ENCODE measurements at regions of chr10 and their contacts with region 1.

Region 1: GRCh38 chr10:30027057-30028005 is 32.1 kb downstream of the JCAD start:
- DNase-seq: peak; percentile 72 to 96 (median 83)
- ATAC-seq: peak; percentile 93
- H3K4me3 ChIP-seq: peak overlapping the region; percentile 35
- H3K4me3 Mint-ChIP-seq: peak overlapping the region; percentile 74
- H3K27ac ChIP-seq: no peak overlapping the region
- H3K27ac Mint-ChIP-seq: peak overlapping the region; percentile 79
- H3K4me1 ChIP-seq: peaks cover 40% of the 10 kb centered on the region
- H3K4me1 Mint-ChIP-seq: peaks cover 36% of the 10 kb centered on the region
- H3K27me3 ChIP-seq: peaks cover 32 to 35% of the 10 kb centered on the region in 2 experiments
- H3K27me3 Mint-ChIP-seq: peaks cover 85% of the 10 kb centered on the region
- CTCF ChIP-seq: peak; percentile 25

Region 2: DNA sequence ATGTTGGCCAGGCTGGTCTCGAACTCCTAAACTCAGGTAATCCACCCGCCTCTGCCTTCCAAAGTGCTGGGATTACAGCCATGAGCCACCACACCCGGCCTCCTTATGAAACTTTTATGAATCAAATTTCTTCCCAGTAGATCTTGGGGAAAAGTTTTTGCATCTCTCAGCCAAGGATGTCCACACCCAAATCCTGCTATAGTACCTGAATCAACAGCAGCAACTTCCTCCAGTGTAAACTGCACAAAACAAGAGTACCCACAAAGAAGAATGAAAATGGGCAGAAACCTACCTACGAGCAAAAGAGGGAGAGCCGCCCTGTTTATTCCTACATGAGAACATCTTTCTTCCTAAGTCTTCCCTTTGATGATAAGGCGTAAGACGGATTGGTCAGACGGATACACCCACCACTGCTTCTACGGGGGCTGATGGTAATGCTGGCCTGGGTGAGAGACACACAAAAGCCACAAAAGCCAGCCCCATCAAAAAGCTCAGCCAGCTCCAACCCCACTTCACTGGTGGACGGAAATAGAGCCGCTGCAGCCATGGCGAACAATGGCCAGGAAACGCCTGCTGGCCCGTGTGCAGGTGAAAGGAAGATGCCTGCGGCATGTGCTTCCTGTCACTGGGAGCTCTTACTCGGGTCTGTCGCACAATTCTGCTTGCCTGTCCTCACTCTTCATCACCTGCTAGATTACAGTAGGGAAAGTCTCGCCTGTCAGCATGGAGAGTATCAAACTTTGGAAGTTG is 21.6 kb after region 1 on chr10:
- CTCF ChIA-PET with region 1: no interaction called
- POLR2A ChIA-PET with region 1: interaction called, 6 read pairs
- intact Hi-C with region 1: loop called in 1 of 2 experiments (anchors 2 kb)
- DNase-seq: peak in 1 of 14 experiments; percentile 35
- ATAC-seq: no peak
- H3K4me3 ChIP-seq: no peak overlapping the region
- H3K4me3 Mint-ChIP-seq: peak overlapping the region; percentile 5
- H3K27ac ChIP-seq: no peak overlapping the region
- H3K27ac Mint-ChIP-seq: no peak overlapping the region
- H3K4me1 ChIP-seq: peaks cover 21% of the 10 kb centered on the region
- H3K4me1 Mint-ChIP-seq: peaks cover 21% of the 10 kb centered on the region
- H3K27me3 ChIP-seq: peaks cover 43 to 48% of the 10 kb centered on the region in 2 experiments
- H3K27me3 Mint-ChIP-seq: peaks cover 78% of the 10 kb centered on the region
- CTCF ChIP-seq: no peak

Region 3: GRCh38 chr10:30059209-30060107 is 32.1 kb after region 1 on chr10 and contains the start of gene JCAD:
- CTCF ChIA-PET with region 1: no interaction called
- POLR2A ChIA-PET with region 1: interaction called, 3 read pairs
- intact Hi-C with region 1: loop called (anchors 2 to 5 kb)
- DNase-seq: peak in 12 of 14 experiments; percentile 12 to 66 (median 40)
- ATAC-seq: peak; percentile 71
- H3K4me3 ChIP-seq: no peak within 1 kb of the TSS
- H3K4me3 Mint-ChIP-seq: peak within 1 kb of the TSS; percentile 28
- H3K27ac ChIP-seq: no peak within 1 kb of the TSS
- H3K27ac Mint-ChIP-seq: no peak within 1 kb of the TSS
- H3K4me1 ChIP-seq: peaks cover 10% of the 10 kb centered on the region
- H3K4me1 Mint-ChIP-seq: peaks cover 5% of the 10 kb centered on the region
- H3K27me3 ChIP-seq: peaks cover 33 to 71% of the 10 kb centered on the region in 2 experiments
- H3K27me3 Mint-ChIP-seq: peaks cover 87% of the 10 kb centered on the region
- CTCF ChIP-seq: no peak
- total RNA-seq, gene JCAD: not detected

Region 4: DNA sequence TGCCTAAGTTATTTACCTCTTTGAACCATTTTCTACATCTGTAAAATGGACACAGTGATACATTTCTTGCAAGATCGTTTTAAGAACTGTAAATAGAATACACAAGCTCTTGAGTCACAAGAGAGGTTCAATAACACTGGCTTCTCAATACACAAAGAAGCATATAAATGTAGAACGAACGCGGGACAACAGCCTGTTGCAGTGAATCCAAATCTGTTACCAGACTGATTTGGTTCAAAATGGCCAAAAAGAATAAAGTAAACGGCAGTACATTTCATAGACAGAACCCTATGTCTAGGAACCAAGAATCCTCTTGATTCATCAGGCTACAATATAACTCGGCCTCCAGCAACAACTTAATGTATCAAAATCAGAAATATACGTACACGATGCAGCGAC is 321.0 kb after region 1 on chr10:
- CTCF ChIA-PET with region 1: no interaction called
- POLR2A ChIA-PET with region 1: no interaction called
- intact Hi-C with region 1: loop called (anchors 10 kb)
- DNase-seq: no peak
- ATAC-seq: peak; percentile 37
- H3K4me3 ChIP-seq: peak overlapping the region; percentile 85
- H3K4me3 Mint-ChIP-seq: peak overlapping the region; percentile 95
- H3K27ac ChIP-seq: no peak overlapping the region
- H3K27ac Mint-ChIP-seq: peak overlapping the region; percentile 91
- H3K4me1 ChIP-seq: peaks cover 22% of the 10 kb centered on the region
- H3K4me1 Mint-ChIP-seq: peaks cover 60% of the 10 kb centered on the region
- H3K27me3 ChIP-seq: no peaks in the 10 kb centered on the region
- H3K27me3 Mint-ChIP-seq: peaks cover 1% of the 10 kb centered on the region
- CTCF ChIP-seq: no peak